ENCODE measurements at regions of chr5 and their contacts with region 1.

Region 1: GRCh38 chr5:35926389-35927051 is 11.9 kb downstream of the CAPSL start:
- DNase-seq: no peak
- H3K4me3 ChIP-seq: no peak overlapping the region
- H3K27ac ChIP-seq: no peak overlapping the region
- H3K4me1 ChIP-seq: peaks cover 4 to 11% (median 8%) of the 10 kb centered on the region in 4 donors
- H3K27me3 ChIP-seq: peaks cover 0 to 55% (median 2%) of the 10 kb centered on the region in 4 donors
- CTCF ChIP-seq: peak; percentile 80 to 84 (median 83)
- EP300 ChIP-seq: no peak
- POLR2A ChIP-seq: no peak

Region 2: DNA sequence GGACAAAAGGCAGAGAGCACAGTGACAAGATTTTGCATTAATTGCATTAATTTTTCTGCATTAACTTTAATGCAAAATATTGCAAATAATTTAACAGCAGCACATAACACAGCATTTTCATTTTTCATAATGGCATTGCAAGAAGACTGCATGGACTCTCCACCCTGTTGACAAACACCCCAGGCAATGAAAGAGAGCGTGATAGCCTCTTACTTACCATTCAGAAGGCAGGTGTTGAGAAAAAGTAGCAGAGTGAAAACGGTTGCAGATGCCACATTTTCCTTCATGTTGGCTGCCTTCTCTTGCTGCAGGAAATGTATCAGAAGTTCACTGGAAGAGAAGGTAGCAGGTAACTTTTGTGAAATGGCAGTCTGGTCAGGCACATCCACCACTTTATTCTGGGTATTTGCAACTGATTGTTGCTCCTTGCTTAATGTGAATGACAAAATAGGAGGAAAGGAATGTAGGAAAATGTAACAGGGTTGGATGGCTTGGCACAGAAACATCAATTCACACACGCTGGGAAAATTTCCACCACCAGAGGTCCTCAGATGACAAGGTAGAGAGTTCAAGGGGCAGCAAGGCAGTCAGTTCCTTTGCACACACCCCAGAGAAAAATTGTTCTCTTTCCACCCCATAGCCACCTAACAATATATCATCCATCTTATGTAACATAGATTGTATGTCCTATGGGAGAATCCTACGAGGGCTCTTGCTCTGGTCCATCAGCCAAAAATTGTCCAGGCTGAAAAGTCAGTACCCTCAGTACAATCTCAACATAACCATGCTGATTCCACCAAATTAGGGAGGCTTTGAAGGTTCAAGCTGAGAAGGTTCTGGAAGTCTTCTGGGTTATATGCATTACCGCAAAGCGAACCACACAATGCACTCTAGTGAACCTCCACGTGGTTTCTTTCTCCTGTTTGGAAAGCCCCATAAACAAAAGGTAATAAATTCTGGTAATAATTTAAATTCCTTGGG is 836.9 kb before region 1 on chr5:
- intact Hi-C with region 1: loop called (anchors 10 kb)
- DNase-seq: no peak
- H3K4me3 ChIP-seq: no peak overlapping the region
- H3K27ac ChIP-seq: no peak overlapping the region
- H3K4me1 ChIP-seq: peaks cover 0 to 11% (median 4%) of the 10 kb centered on the region in 4 donors
- H3K27me3 ChIP-seq: no peaks in the 10 kb centered on the region
- CTCF ChIP-seq: peak; percentile 21 to 64 (median 42)
- EP300 ChIP-seq: no peak
- POLR2A ChIP-seq: no peak

Region 3: DNA sequence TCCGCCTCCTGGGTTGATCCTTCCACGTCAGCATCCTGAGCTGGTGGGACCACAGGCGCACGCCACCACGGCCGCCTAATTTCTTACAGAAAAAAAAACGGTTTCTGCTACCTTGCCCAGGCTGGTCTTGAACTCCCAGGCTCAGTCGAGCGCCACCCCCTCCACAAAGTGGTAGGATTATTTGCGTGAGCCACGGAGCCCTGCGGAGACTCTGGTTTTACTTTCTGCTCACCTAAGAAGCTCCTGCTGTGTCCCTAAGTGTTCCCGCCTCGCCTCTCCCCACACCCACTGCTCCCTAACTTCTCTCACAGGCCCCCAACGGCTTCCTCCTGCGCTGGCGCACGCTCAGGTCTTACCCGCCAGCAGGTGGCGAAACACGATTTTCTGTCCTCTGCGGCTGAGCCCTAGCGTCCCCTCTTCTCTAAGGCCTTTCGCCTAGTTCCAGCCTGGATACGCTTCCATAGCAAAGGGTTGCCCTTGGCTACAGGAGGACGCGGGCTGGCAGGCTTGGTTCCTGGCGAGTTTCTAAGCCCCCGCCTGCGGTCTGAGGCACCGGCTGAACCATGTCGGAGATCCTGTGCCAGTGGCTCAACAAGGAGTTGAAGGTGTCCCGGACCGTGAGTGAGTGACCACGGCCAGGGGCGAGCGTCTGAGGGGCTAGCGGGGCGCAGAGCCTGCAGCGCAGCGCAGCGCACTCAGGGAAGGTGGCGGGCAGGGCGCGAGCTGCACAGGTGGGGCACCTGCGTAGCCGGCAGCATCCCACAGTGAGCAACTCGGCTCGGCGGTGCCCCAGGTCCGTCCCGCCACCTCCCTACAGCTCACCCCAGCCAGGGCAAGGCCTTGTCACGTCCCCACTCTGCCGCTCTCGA is 308.9 kb before region 1 on chr5 and contains the start of gene SPEF2:
- intact Hi-C with region 1: loop called (anchors 1 kb)
- DNase-seq: peak; percentile 93
- H3K4me3 ChIP-seq: peak within 1 kb of the TSS; percentile 74 to 91 (median 84)
- H3K27ac ChIP-seq: peak within 1 kb of the TSS; percentile 16 to 41 (median 36)
- H3K4me1 ChIP-seq: peaks cover 0 to 19% (median 15%) of the 10 kb centered on the region in 4 donors
- H3K27me3 ChIP-seq: no peaks in the 10 kb centered on the region
- CTCF ChIP-seq: peak; percentile 63 to 77 (median 77)
- EP300 ChIP-seq: no peak
- POLR2A ChIP-seq: no peak
- total RNA-seq, gene SPEF2: 2.8 to 4.6 (median 3.1) TPM

Region 4: DNA sequence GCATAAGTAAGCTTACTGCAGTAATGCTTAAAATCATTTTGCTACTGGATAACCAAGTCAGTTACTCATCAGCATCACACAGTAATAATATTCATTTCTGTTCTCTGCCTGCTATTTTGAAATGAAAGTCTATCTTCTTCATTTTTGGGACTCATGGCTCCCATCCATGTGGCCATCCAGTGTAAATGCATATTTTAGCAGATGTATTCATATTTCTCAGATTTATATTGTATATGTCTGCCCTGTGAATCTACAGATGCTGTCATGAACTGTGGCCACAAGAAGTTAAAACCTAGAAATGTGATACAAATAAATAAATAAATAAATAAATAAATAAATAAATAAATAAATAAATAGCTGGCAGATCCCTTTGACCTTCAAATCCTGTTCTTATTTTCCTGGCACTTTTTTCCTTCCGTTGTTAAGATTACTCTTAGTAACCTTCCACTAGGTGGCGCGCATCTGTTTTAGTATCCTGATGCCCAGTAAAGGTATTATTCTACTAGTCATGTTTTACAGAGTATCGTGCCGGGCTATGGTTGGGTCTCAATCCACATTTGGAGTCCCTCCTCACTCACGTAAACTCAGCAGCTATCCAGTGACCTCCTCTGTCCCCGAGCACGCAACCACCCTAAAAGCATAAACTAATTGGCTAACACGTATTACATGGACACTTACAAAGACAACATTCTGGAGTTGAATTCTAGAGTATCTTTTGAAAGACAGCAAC is 149.0 kb before region 1 on chr5:
- intact Hi-C with region 1: loop called (anchors 2 kb)
- DNase-seq: no peak
- H3K4me3 ChIP-seq: no peak overlapping the region
- H3K27ac ChIP-seq: no peak overlapping the region
- H3K4me1 ChIP-seq: peaks cover 0 to 8% (median 0%) of the 10 kb centered on the region in 4 donors
- H3K27me3 ChIP-seq: no peaks in the 10 kb centered on the region
- CTCF ChIP-seq: peak; percentile 31 to 59 (median 47)
- EP300 ChIP-seq: no peak
- POLR2A ChIP-seq: no peak